GM12878 (cell line): ENCODE measurements at regions of chr19 and their contacts with region 1.

Region 1: DNA sequence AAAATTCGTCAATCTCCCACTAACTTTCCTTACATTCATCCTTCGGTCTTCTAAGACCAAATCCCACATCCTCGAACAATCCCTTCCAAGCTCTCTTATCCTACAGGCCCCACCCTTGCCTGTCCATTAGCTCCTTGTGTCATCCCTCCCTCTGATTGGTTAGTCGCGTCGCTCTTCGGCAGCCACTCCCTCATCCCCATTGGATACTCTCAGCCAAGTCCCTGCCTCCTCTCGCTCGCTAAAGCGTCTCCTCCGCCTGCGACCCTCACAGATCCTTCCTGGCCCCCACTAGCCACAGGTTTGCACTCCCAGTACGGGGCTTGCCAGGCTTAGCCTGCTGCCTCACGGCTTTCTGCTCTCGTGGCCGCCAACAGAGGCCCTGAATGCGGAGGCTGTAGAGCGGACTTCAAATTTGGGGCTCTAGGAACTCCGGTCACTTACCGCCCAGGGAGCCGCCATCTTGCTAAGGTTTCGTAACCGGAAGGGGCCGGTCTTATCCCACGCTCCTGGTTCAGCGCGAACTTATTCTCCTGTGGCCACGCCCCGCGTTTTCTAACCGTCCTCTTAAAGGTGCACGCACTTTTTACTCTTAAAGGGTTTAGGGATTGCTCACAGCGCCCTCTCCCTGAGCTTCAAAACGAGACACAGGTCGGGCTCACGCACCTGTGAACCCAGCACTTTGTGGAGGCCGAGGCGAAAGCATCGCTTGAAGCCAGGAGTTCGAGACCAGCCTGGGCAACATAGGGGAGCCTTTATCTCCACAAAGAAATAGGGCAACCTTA is at the start of gene DMAC2:
- DNase-seq: peak; percentile 89
- ATAC-seq: peak; percentile 98
- H3K4me3 ChIP-seq: peak within 1 kb of the TSS; percentile 92
- H3K27ac ChIP-seq: peak within 1 kb of the TSS; percentile 85
- H3K4me1 ChIP-seq: no peaks in the 10 kb centered on the region; the same call in 1 of the 2 replicates
- H3K27me3 ChIP-seq: no peaks in the 10 kb centered on the region
- CTCF ChIP-seq: peak; percentile 62 to 78 (median 69)
- EP300 ChIP-seq: no peak
- POLR2A ChIP-seq: peak; percentile 89
- RAD21 ChIP-seq: peak; percentile 41
- polyA plus RNA-seq, gene DMAC2: 10.8 to 14.8 TPM

Region 2: GRCh38 chr19:41206926-41207750 is 232.5 kb before region 1 on chr19:
- CTCF ChIA-PET with region 1: interaction called, 3 read pairs
- POLR2A ChIA-PET with region 1: no interaction called
- RAD21 ChIA-PET with region 1: interaction called, 7 read pairs
- SMC1A ChIA-PET with region 1: interaction called, 3 read pairs
- in situ Hi-C with region 1: no loop called
- intact Hi-C with region 1: loop called (anchors 5 kb)
- DNase-seq: no peak
- ATAC-seq: no peak
- H3K4me3 ChIP-seq: no peak overlapping the region
- H3K27ac ChIP-seq: no peak overlapping the region
- H3K4me1 ChIP-seq: no peaks in the 10 kb centered on the region
- H3K27me3 ChIP-seq: no peaks in the 10 kb centered on the region
- CTCF ChIP-seq: no peak
- EP300 ChIP-seq: no peak
- POLR2A ChIP-seq: no peak
- RAD21 ChIP-seq: no peak

Region 3: DNA sequence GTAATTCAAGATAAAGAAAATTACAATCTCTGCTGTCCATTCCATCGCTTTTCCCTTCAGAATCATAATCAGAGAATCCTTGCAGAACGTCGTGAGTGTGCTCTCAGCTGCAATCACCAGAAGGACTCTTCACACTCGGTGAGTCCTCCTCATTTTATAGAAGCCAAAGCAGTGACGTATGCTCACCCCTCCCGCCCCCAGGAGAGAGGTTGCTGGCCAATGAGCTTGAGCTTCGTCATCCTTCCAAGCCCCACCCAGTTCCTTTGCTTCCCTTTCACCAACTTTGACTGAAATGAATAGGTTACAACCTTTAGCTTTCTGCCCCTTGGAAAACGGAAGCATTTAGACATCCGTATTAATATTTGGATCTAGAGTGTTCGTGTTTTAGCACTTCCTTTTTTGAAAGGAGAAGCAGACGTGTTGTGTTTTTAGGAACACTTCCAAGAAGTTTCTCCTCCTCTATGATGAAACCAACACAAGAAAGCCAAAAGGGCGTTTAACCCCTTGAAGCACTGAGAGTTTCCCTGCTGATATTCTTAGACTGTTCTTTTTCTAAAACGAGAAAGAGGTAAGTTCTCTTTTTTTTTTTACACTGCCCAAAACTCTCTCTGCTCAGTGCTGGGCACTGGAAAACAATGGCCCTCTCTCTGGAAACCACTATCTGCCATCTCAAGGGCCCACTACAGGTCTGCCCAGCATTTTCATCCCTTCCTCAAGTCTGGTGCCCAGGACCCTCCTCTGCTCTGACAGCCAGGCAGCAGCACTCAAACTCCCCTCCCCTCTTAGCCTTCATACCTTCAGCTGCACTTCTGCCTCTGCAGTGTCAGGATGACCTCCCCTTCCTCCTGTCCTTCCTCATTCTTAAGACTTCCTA is 92.0 kb after region 1 on chr19:
- CTCF ChIA-PET with region 1: interaction called, 7 read pairs
- POLR2A ChIA-PET with region 1: no interaction called
- RAD21 ChIA-PET with region 1: interaction called, 6 read pairs
- SMC1A ChIA-PET with region 1: interaction called, 3 read pairs
- in situ Hi-C with region 1: loop called (anchors 10 kb)
- intact Hi-C with region 1: no loop called
- DNase-seq: no peak
- ATAC-seq: peak; percentile 61
- H3K4me3 ChIP-seq: peak overlapping the region; percentile 65
- H3K27ac ChIP-seq: peak overlapping the region; percentile 76
- H3K4me1 ChIP-seq: peaks cover 56% of the 10 kb centered on the region
- H3K27me3 ChIP-seq: no peaks in the 10 kb centered on the region
- CTCF ChIP-seq: no peak
- EP300 ChIP-seq: no peak
- POLR2A ChIP-seq: peak; percentile 96
- RAD21 ChIP-seq: no peak

Region 4: DNA sequence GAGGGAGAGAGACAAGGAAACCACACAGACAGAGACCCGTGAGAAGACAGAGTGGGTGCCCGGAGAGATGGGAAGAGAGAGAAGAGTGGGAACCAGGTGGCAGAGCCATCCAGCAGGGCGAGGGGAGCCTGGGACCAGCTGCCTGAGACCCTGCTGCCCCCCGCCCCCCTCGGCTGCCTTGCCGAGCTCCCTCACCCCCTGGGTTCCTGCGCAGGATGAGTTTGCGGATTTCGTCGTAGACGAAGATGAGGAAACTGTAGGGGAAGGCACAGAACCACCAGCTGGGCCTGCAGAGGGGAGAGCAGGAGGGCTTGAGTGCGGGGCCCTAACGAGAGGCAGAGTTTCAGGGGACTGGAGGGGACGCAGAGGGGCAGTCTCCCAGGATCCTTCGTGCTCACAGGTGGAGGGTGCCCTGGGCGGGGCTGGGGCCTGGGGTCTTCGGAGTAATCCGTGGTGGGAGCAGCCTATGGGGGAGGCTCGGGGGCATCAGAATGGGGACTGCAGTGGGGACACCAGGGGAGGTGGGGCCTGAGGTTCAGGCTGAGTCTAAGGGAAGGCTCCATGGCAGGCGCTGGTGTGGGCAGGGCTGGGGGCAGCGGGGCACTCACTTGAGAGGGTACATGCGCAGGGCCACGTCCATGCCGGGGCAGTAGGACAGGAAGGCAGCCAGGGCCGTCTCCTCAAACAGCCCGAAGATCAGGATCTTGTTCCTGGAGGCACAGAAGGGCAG is 527.6 kb after region 1 on chr19:
- CTCF ChIA-PET with region 1: no interaction called
- POLR2A ChIA-PET with region 1: no interaction called
- RAD21 ChIA-PET with region 1: no interaction called
- SMC1A ChIA-PET with region 1: no interaction called
- in situ Hi-C with region 1: no loop called
- intact Hi-C with region 1: no loop called
- DNase-seq: no peak
- ATAC-seq: no peak
- H3K4me3 ChIP-seq: no peak overlapping the region
- H3K27ac ChIP-seq: no peak overlapping the region
- H3K4me1 ChIP-seq: no peaks in the 10 kb centered on the region
- H3K27me3 ChIP-seq: no peaks in the 10 kb centered on the region; a peak in 3 of 4 replicates
- CTCF ChIP-seq: no peak
- EP300 ChIP-seq: no peak
- POLR2A ChIP-seq: no peak
- RAD21 ChIP-seq: no peak